T-cell (primary cell): ENCODE measurements at regions of chr10 and their contacts with region 1.

Region 1: DNA sequence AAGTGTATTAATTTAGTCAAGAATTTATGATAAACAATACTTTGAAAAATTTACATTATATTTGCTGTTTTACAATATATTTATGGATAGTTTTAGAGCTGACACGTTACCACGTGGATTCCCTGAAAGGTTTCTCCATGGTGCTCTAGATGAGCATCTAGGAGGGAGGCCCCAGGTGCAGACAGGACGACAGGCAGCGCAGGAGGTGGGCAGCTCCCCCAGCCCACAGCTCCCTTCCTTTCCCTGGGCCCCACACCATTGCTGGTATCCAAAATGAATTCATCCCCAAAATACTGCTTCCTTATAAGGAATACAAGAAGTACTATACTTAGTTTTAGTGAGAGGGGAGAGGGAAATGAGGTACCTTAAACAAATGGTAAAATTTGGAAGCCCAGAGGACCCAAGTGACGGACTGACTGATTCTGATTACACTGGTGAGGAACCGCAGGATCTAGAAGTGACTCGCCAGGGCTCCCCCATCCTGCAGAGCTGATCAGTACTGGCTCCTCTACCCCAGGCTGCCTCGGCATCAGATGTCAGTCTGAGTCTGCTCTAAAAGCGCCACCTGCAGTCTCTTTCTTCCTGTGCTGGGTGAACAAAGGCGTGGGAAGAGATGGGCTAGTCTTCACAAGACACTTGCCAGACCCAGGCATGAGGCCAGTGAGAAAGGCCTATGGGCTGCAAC is 89.2 kb downstream of the DLG5 start:
- DNase-seq: peak; percentile 24 to 81 (median 57)
- ATAC-seq: peak; percentile 56 to 70 (median 66)
- H3K4me3 ChIP-seq: no peak overlapping the region
- H3K4me3 Mint-ChIP-seq: peak overlapping the region in 1 of 3 donors; percentile 11
- H3K27ac ChIP-seq: peak overlapping the region; percentile 93
- H3K27ac Mint-ChIP-seq: peak overlapping the region in 1 of 2 donors; percentile 48
- H3K4me1 ChIP-seq: peaks cover 4 to 39% of the 10 kb centered on the region in 2 experiments
- H3K4me1 Mint-ChIP-seq: peaks cover 11 to 32% (median 24%) of the 10 kb centered on the region in 3 donors
- H3K27me3 ChIP-seq: no peaks in the 10 kb centered on the region
- H3K27me3 Mint-ChIP-seq: no peaks in the 10 kb centered on the region

Region 2: GRCh38 chr10:77501152-77501845 is 336.1 kb before region 1 on chr10:
- CTCF ChIA-PET with region 1: no interaction called
- POLR2A ChIA-PET with region 1: no interaction called
- DNase-seq: no peak
- ATAC-seq: peak in 1 of 4 experiments; percentile 12
- H3K4me3 ChIP-seq: no peak overlapping the region
- H3K4me3 Mint-ChIP-seq: no peak overlapping the region
- H3K27ac ChIP-seq: no peak overlapping the region
- H3K27ac Mint-ChIP-seq: no peak overlapping the region
- H3K4me1 ChIP-seq: no peaks in the 10 kb centered on the region
- H3K4me1 Mint-ChIP-seq: no peaks in the 10 kb centered on the region
- H3K27me3 ChIP-seq: peaks cover 0 to 19% of the 10 kb centered on the region in 2 experiments
- H3K27me3 Mint-ChIP-seq: peaks cover 2 to 5% of the 10 kb centered on the region in 2 donors

Region 3: GRCh38 chr10:77710759-77711682 is 126.4 kb before region 1 on chr10:
- CTCF ChIA-PET with region 1: interaction called, 4 to 20 read pairs
- POLR2A ChIA-PET with region 1: no interaction called
- DNase-seq: peak; percentile 10 to 80 (median 59)
- ATAC-seq: peak; percentile 88 to 95 (median 90)
- H3K4me3 ChIP-seq: peak overlapping the region; percentile 44 to 52
- H3K4me3 Mint-ChIP-seq: peak overlapping the region; percentile 45 to 56 (median 52)
- H3K27ac ChIP-seq: no peak overlapping the region
- H3K27ac Mint-ChIP-seq: no peak overlapping the region
- H3K4me1 ChIP-seq: peaks cover 0 to 18% of the 10 kb centered on the region in 2 experiments
- H3K4me1 Mint-ChIP-seq: peaks cover 6 to 13% (median 11%) of the 10 kb centered on the region in 3 donors
- H3K27me3 ChIP-seq: peaks cover 0 to 34% of the 10 kb centered on the region in 2 experiments
- H3K27me3 Mint-ChIP-seq: peaks cover 22 to 30% of the 10 kb centered on the region in 2 donors

Region 4: DNA sequence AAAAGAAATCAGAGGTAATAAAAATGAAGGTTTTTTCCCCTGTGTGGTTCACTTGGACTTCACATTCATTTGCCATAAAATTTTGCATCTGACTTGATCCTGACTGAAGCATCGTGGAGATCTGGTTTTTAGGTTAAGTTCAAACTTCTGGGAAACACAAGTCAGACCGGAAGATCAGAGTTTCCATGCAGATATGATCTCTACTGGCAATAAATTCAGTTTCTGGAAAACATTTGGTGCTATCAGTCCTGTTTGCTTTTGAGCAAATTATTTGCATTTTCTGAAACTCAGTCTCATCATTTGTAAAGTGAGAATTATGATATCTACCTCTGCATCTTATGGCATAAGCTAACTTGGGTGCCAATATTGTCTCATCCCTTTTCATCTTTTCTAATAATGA is 118.4 kb before region 1 on chr10:
- CTCF ChIA-PET with region 1: interaction called, 23 read pairs
- POLR2A ChIA-PET with region 1: no interaction called
- DNase-seq: no peak
- ATAC-seq: no peak
- H3K4me3 ChIP-seq: no peak overlapping the region
- H3K4me3 Mint-ChIP-seq: no peak overlapping the region
- H3K27ac ChIP-seq: no peak overlapping the region
- H3K27ac Mint-ChIP-seq: no peak overlapping the region
- H3K4me1 ChIP-seq: no peaks in the 10 kb centered on the region
- H3K4me1 Mint-ChIP-seq: no peaks in the 10 kb centered on the region
- H3K27me3 ChIP-seq: no peaks in the 10 kb centered on the region
- H3K27me3 Mint-ChIP-seq: peaks cover 5 to 8% of the 10 kb centered on the region in 2 donors

Region 5: GRCh38 chr10:77874872-77875271 is 37.5 kb after region 1 on chr10:
- CTCF ChIA-PET with region 1: interaction called in 1 of 2 experiments, 11 read pairs
- POLR2A ChIA-PET with region 1: no interaction called
- DNase-seq: no peak
- ATAC-seq: no peak
- H3K4me3 ChIP-seq: no peak overlapping the region
- H3K4me3 Mint-ChIP-seq: no peak overlapping the region
- H3K27ac ChIP-seq: no peak overlapping the region
- H3K27ac Mint-ChIP-seq: no peak overlapping the region
- H3K4me1 ChIP-seq: peaks cover 5 to 45% of the 10 kb centered on the region in 2 experiments
- H3K4me1 Mint-ChIP-seq: peaks cover 15 to 31% (median 28%) of the 10 kb centered on the region in 3 donors
- H3K27me3 ChIP-seq: no peaks in the 10 kb centered on the region
- H3K27me3 Mint-ChIP-seq: peaks cover 5 to 6% of the 10 kb centered on the region in 2 donors